Ascending aorta (tissue), 2 donors: ENCODE measurements at regions of chr2 and their contacts with region 1.

Region 1: GRCh38 chr2:171922230-171923022 is at the start of gene HAT1:
- DNase-seq: peak; percentile 84 to 98
- H3K4me3 ChIP-seq: peak within 1 kb of the TSS; percentile 87 to 97
- H3K27ac ChIP-seq: peak within 1 kb of the TSS; percentile 90 to 94
- H3K4me1 ChIP-seq: peaks cover 8 to 16% of the 10 kb centered on the region in 2 donors
- H3K27me3 ChIP-seq: no peaks in the 10 kb centered on the region
- CTCF ChIP-seq: no peak
- total RNA-seq, gene HAT1: 28.3 TPM

Region 2: DNA sequence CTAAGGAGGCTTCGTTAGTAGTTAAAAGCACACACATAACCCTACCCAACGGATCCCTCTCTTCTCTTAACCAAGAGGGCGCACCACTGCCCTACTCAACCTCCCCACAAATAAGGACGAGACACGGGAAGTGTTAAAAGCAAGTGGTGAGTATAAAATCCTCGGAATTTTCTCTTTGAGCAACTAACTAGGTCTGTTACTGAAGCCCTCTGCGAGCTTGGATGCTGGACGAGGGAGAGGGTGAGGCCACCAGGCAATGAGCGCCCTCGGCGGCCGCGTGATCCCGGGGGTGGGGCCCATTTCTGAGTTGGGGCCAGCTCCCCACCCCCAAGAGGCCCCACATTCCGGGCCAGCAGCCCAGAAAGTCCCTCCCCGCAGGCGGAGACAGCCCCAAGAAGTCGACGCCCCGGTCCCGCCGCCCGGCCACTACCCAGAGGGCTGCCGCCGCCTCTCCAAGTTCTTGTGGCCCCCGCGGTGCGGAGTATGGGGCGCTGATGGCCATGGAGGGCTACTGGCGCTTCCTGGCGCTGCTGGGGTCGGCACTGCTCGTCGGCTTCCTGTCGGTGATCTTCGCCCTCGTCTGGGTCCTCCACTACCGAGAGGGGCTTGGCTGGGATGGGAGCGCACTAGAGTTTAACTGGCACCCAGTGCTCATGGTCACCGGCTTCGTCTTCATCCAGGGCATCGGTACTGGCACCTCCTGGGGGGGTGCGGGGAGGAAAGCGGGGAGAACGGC is 400.2 kb before region 1 on chr2 and contains the start of gene CYBRD1:
- intact Hi-C with region 1: loop called (anchors 5 kb)
- DNase-seq: peak; percentile 47 to 93
- H3K4me3 ChIP-seq: peak within 1 kb of the TSS; percentile 72 to 90
- H3K27ac ChIP-seq: peak within 1 kb of the TSS; percentile 94 to 97
- H3K4me1 ChIP-seq: peaks cover 0 to 23% of the 10 kb centered on the region in 2 donors
- H3K27me3 ChIP-seq: no peaks in the 10 kb centered on the region
- CTCF ChIP-seq: no peak
- total RNA-seq, gene CYBRD1: 222 TPM

Region 3: DNA sequence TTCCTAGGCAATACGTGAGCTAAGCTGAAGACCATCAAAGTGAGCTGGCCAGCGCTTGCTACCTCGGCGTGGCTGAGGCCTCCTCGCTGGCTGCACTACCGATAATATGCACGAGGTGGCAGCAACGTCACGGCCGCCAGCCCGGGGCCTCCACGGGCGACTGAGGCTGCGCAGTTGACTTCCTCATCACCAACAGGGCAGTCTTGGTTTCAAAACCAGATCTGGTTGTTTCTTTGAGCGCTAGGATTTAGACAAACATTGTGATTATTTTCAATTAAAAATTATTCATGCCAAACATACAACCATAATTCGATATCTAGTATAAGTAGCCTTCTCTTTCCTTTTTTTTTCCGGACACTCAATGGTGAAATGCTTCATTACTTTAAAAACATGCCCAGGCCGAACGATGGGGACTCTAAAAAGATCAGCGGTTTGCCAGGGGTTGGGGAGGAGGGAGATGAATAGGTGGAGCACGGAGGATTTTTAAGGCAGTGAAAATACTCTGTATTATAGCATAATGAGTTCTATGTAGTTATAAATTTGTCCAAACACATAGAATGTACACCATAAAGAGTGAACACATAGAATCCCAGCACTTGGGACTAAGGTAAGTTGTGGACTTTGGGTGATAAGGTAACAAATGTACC is 348.2 kb before region 1 on chr2:
- intact Hi-C with region 1: loop called (anchors 1 kb)
- DNase-seq: peak in 1 of 2 donors; percentile 88
- H3K4me3 ChIP-seq: peak overlapping the region in 1 of 2 donors; percentile 21
- H3K27ac ChIP-seq: no peak overlapping the region
- H3K4me1 ChIP-seq: no peaks in the 10 kb centered on the region
- H3K27me3 ChIP-seq: no peaks in the 10 kb centered on the region
- CTCF ChIP-seq: peak; percentile 78 to 99 (median 98)

Region 4: DNA sequence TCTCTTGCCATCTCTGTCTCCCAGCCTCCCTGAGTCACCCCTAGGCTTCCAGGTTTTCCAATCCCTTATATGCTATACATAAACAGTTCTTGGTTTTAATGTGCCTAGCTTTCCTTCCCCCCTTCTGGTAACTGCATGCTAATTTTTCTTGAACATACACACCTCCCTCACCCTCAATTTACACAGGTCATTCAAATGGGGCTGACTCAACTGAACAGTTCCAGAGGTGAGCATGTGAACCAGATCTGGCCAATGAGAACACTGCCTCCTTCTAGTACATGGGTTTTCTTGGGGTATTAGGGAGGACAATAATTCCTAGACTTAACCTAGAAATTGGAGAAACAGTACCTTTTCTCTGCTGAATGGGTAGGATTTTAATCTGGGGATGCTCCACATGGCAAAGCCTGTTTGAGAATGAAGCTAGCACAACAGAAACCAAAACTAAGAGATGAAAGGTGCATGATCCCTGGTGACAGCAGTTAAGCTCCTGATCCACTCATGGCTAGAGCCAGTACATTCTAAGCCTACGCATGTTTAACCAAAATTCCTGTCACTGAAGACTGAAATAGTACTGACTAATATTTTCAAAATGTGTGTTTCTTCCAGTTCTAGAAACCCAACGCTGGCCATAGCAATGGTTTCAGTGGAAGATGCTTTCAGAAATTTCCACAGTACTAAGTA is 40.2 kb before region 1 on chr2:
- intact Hi-C with region 1: loop called (anchors 5 kb)
- DNase-seq: no peak
- H3K4me3 ChIP-seq: peak overlapping the region in 1 of 2 donors; percentile 12
- H3K27ac ChIP-seq: peak overlapping the region; percentile 61 to 69
- H3K4me1 ChIP-seq: peaks cover 0 to 14% of the 10 kb centered on the region in 2 donors
- H3K27me3 ChIP-seq: no peaks in the 10 kb centered on the region
- CTCF ChIP-seq: no peak

Region 5: GRCh38 chr2:171999604-172000469 is 77.4 kb after region 1 on chr2 and contains the start of gene METAP1D:
- intact Hi-C with region 1: loop called (anchors 2 kb)
- DNase-seq: peak; percentile 57 to 92
- H3K4me3 ChIP-seq: peak within 1 kb of the TSS; percentile 62 to 78
- H3K27ac ChIP-seq: no peak within 1 kb of the TSS
- H3K4me1 ChIP-seq: no peaks in the 10 kb centered on the region
- H3K27me3 ChIP-seq: no peaks in the 10 kb centered on the region
- CTCF ChIP-seq: no peak
- total RNA-seq, gene METAP1D: not detected

Region 6: GRCh38 chr2:172555522-172556283 is 633.3 kb after region 1 on chr2 and contains the start of gene PDK1:
- intact Hi-C with region 1: loop called (anchors 2 kb)
- DNase-seq: peak; percentile 52 to 93
- H3K4me3 ChIP-seq: peak within 1 kb of the TSS; percentile 96 to 97
- H3K27ac ChIP-seq: peak within 1 kb of the TSS; percentile 93 to 95
- H3K4me1 ChIP-seq: peaks cover 0 to 10% of the 10 kb centered on the region in 2 donors
- H3K27me3 ChIP-seq: no peaks in the 10 kb centered on the region
- CTCF ChIP-seq: no peak
- total RNA-seq, gene PDK1: 24.2 TPM